Posterior vena cava (tissue), 2 donors: ENCODE measurements at regions of chr12 and their contacts with region 1.

Region 1: DNA sequence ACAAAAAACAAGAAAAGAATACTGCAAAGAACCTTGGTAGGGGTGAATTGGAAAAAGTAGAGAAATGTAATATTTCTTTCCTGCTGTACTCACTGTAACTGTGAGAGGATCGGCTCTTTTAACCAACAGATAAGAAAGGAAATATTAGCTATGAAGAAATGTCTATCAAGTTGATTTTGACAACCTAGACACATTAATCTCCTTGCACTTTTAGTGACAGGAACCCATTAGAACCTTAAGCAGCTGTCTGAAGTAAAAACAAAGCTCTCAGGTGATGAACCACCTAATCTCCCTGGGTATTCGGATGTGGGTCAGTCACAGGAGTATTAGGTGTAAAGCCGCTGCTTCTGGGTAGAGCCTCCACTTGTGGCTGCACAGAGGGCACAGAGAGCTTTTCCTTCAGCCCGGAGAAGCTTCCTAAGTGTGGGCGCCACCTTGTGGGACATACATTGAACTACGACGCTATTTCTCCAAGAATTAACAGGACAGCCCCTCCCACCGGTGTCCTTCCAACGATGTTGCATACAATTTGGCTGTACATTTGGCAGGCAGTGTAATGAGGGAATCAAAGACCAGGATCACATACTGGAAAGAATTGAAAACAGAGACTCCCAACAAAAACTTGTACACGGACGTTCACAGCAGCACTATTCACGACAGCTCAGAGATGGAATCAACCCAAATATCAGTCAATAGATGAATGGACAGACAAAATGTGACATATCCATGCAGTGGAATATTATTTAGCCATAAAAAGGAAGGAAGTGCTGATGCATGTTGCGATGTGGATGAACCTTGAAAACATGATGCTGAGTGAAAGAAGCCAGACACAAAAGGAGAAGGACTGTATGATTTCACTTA is 28.9 kb upstream of the MAPKAPK5 start:
- DNase-seq: peak; percentile 89

Region 2: GRCh38 chr12:111753144-111753881 is 59.8 kb before region 1 on chr12:
- intact Hi-C with region 1: loop called (anchors 2 to 5 kb)
- DNase-seq: peak; percentile 86

Region 3: DNA sequence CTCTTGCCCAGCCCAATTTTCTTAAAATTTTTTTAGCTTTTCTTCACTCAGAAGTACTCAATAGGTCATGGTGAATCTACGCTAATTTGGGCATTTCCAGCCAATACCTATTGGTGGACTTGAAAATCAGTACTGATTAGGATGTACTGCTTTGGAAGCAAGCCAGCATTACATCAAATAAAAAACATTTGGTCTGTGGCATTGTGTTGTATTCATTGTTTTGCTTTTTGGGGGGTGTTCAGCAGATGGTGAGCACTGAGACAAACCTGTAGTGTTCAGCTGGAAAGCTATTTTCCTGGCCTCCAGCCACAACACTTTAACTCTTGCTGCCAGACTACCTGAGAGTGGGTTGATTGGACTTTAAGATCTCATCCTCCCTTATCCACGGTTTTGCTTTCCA is 32.9 kb after region 1 on chr12:
- intact Hi-C with region 1: loop called in 1 of 2 experiments (anchors 1 kb)
- DNase-seq: no peak

Region 4: GRCh38 chr12:112012775-112013600 is 199.9 kb after region 1 on chr12 and contains the starts of genes ERP29 and TMEM116:
- intact Hi-C with region 1: no loop called
- DNase-seq: peak; percentile 100
- total RNA-seq, gene ERP29: 30.4 to 52.2 TPM
- total RNA-seq, gene TMEM116: 6.1 to 7.0 TPM